ENCODE measurements at regions of chr1 and their contacts with region 1.

Region 1: DNA sequence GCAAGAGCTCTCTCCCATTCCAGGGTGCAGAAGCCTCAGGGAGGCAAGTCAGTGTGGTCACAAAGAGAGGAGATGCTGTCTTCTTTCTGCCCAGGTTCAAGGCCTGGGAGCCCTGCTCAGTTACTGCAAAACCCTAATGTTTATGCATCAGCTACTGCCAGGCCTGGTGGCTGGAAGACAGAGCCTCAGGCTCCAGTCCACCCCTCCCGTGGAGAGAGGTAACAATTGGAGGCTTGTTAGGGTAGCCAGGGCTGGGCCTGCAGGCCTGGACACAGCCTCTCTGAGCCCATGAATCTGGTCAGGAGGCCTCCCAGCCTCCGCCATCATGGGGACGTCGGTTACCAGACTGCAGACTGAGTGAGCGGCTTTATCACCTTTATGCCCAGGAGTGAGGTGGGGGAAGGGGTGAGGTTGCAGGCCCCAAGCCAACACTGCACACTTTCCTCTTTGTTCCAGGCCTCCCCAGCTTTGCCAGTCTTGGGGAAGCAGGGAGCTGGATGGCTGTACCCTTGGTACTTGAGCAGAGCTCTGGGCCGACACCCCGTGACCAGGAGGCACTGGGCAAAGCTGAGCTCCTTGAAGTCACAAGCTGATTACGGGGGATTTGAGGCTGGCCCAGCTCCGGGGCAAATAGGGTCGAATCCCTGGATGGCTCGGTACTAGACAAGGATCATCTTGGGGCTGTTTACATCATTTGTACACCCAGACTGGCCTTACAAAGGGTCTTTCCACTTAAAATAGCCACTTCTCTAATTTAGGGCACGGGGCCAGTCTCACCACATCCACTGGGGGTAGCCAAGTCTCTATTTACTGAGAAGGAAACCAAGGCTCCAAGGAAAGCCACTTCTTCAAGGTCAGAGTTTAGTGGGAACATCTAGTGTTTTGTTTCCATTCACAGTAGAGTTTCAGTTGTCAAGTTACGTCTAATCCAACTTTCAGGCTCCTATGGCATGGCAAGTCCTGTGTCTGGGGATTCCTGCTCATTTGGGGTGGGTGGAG is 5.2 kb downstream of the SLC2A1 start:
- DNase-seq: peak in 2 of 3 donors; percentile 38 to 46
- H3K4me3 ChIP-seq: no peak overlapping the region
- H3K27ac ChIP-seq: peak overlapping the region in 1 of 2 experiments; percentile 54
- H3K4me1 ChIP-seq: peaks cover 0 to 75% (median 53%) of the 10 kb centered on the region in 4 experiments
- H3K27me3 ChIP-seq: no peaks in the 10 kb centered on the region

Region 2: DNA sequence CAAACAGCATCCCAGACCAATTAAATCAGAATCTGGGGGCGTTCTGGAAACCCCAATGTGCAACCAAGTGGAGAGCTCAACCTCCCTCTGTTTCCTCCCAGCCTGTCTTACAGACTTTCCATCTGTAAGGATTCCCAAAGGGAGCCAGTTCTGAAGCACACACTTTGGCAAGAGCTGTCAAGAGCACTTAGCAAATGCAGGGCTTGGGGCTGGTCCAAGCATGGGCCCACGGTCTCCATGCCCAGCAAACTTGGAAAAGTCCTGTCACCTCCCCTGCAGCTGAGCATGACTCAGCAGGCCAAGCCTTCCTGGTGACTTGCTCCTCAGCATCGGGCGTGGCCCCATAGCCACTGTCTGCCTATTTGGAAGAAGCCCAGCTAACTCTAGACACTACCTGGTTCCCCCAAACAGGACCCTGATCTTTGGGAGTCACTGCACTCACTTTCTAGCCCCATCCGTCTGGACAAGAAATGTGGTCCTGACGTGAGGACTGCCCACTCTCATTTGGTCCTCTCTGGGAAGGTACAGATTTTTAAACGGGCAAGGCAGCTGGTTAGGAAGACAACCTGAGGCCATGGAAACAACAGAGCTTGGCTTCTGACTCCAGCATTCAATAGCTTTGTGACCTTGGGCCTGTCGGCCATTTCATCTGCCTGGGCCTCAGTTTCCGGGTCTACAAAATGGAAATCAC is 11.7 kb before region 1 on chr1:
- CTCF ChIA-PET with region 1: interaction called, 11 read pairs
- POLR2A ChIA-PET with region 1: interaction called, 3 read pairs
- DNase-seq: peak in 2 of 3 donors; percentile 55 to 63
- H3K4me3 ChIP-seq: no peak overlapping the region
- H3K27ac ChIP-seq: no peak overlapping the region
- H3K4me1 ChIP-seq: peaks cover 4 to 86% (median 78%) of the 10 kb centered on the region in 4 experiments
- H3K27me3 ChIP-seq: no peaks in the 10 kb centered on the region

Region 3: DNA sequence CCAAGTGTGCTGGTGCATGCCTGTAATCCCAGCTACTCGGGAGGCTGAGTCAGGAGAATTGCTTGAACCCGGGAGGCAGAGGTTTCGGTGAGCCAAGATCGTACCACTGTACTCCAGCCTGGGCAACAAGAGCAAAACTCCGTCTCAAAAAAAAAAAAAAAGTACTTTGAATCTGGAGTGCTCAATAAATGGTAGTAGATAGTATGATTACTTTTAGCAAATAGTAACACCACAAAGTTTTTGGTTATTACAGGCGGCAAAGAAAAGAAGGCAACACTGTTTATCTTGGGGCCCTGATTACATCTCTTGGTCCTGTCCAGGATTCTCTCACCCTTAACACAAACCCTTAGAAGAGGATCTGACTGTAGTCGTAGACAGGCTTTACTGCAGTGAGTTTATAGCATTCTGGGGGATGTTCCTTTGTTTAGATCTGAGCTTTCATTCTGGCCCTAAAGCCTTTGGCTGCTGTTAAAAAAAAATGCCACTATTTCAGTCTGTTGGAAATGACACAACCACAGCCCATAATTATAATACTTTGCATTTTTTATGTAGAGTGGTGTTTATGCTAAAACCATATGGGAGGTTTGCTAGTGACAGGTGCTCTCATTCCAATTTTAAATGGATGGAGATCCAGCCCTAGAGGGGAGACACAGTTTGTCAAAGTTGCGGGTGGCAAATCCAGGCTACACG is 84.9 kb after region 1 on chr1:
- CTCF ChIA-PET with region 1: no interaction called
- POLR2A ChIA-PET with region 1: no interaction called
- DNase-seq: no peak
- H3K4me3 ChIP-seq: no peak overlapping the region
- H3K27ac ChIP-seq: no peak overlapping the region
- H3K4me1 ChIP-seq: peaks cover 0 to 3% (median under 1%) of the 10 kb centered on the region in 4 experiments
- H3K27me3 ChIP-seq: no peaks in the 10 kb centered on the region

Region 4: DNA sequence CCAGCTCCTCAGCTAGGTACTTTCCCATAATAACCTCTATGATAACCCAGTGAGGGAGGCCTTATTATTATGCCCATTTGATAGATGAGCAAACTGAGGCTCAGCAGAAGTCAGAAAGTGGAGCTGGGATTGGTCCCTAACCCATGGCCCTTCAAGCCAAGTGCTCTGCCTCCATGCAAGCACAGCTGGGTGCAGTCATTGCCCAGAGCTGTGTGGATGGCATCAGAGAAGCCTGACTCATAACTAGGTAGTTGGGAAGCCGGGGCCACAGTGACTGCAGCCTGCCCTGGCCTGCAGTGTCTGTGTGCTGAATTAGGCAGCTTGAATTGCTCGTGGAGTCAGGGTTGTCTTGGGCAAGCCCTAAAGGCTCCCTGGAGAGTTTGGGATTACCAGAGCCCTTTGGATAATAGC is 95.1 kb after region 1 on chr1:
- CTCF ChIA-PET with region 1: no interaction called
- POLR2A ChIA-PET with region 1: no interaction called
- DNase-seq: no peak
- H3K4me3 ChIP-seq: no peak overlapping the region
- H3K27ac ChIP-seq: no peak overlapping the region
- H3K4me1 ChIP-seq: no peaks in the 10 kb centered on the region
- H3K27me3 ChIP-seq: no peaks in the 10 kb centered on the region

Measured in common myeloid progenitor, CD34-positive (primary cell).